ENCODE measurements at regions of chr5 and their contacts with region 1.

Region 1: DNA sequence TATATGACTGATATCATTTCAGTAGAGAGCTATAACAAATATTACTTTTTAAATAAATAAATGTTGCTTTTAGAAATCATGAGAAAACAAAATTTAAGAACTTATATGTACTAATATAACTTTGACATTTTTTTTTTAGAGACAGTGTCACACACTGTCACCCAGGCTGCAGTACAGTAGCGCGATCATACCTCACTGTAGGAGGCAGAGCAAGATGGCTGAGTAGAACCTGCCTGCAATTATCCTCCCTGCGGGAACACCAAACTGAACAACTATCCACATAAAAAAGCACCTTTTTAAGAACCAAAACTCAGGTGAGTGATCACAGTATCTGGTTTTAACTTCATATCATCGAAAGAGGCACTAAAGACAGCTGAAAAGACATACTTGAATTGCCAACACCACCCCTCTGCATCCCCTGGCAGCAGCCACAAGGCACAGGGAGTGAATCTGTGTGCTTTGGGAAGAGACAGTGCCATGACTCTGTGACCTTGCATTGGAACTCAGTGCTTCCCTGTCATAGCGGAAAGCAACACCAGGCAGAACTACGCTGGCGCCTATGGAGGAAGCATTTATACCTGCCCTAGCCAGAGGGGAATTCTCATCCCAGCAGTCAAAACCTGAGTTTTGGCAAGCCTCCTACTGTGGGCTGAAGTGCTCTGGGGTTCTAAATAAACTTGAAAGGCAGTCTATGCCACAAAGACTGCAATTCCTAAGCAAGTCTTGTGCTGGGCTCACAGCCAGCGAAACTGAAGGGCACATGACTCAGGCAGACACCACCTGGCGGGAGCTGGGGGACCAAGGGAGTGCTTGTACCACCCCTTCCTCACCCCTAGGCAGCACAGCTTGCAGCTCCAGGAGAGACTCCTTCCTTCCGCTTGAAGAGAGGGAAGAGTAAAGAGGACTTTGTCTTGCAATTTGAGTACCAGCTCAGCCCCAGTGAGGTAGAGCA is 142.7 kb downstream of the FBXL17 start:
- DNase-seq: no peak
- ATAC-seq: no peak
- H3K4me3 ChIP-seq: no peak overlapping the region
- H3K27ac ChIP-seq: no peak overlapping the region
- H3K4me1 ChIP-seq: no peaks in the 10 kb centered on the region
- H3K27me3 ChIP-seq: no peaks in the 10 kb centered on the region
- CTCF ChIP-seq: no peak
- POLR2A ChIP-seq: no peak

Region 2: GRCh38 chr5:108046955-108047670 is 192.1 kb before region 1 on chr5:
- in situ Hi-C with region 1: no loop called
- intact Hi-C with region 1: no loop called
- DNase-seq: no peak
- ATAC-seq: no peak
- H3K4me3 ChIP-seq: no peak overlapping the region
- H3K27ac ChIP-seq: no peak overlapping the region
- H3K4me1 ChIP-seq: no peaks in the 10 kb centered on the region
- H3K27me3 ChIP-seq: no peaks in the 10 kb centered on the region
- CTCF ChIP-seq: no peak
- POLR2A ChIP-seq: no peak

Region 3: DNA sequence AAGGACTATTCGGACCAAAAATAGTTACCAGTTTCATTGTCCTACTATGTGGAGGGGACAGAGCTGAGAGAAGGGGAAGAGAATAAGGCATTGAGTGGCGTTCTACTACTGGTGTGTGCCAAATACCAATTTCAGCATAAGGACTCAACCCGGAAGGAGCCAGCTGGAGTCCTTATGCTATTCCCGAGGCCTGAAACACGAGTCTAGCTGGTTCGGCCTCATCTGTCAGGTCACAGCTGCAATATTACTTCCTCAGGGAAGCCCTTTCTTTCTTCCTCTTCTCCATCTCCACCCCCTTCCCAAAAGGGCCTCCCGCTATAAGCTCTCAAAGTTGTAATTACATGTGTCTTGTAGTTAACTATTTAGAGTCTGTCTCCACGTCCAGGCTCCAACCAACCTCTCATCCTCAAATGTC is 488.0 kb after region 1 on chr5:
- in situ Hi-C with region 1: no loop called
- intact Hi-C with region 1: no loop called
- DNase-seq: peak; percentile 24 to 37
- ATAC-seq: peak; percentile 41 to 43
- H3K4me3 ChIP-seq: peak overlapping the region; percentile 74 to 90 (median 86)
- H3K27ac ChIP-seq: peak overlapping the region; percentile 84 to 91 (median 87)
- H3K4me1 ChIP-seq: peaks cover 13 to 15% of the 10 kb centered on the region in 2 donors
- H3K27me3 ChIP-seq: no peaks in the 10 kb centered on the region
- CTCF ChIP-seq: no peak
- POLR2A ChIP-seq: no peak

Region 4: GRCh38 chr5:109863752-109864151 is 1624.5 kb after region 1 on chr5:
- in situ Hi-C with region 1: no loop called
- intact Hi-C with region 1: loop called (anchors 5 kb)
- DNase-seq: no peak
- ATAC-seq: no peak
- H3K4me3 ChIP-seq: no peak overlapping the region
- H3K27ac ChIP-seq: no peak overlapping the region
- H3K4me1 ChIP-seq: no peaks in the 10 kb centered on the region
- H3K27me3 ChIP-seq: no peaks in the 10 kb centered on the region
- CTCF ChIP-seq: no peak
- POLR2A ChIP-seq: no peak